ENCODE measurements at regions of chr19 and their contacts with region 1.

Region 1: GRCh38 chr19:46661020-46661731 is at the start of gene DACT3:
- DNase-seq: peak; percentile 100
- ATAC-seq: peak; percentile 96
- H3K4me3 ChIP-seq: peak within 1 kb of the TSS; percentile 26
- H3K4me1 ChIP-seq: peaks cover 16% of the 10 kb centered on the region
- CTCF ChIP-seq: no peak
- total RNA-seq, gene DACT3: 1.9 to 60.9 (median 3.4) TPM

Region 2: GRCh38 chr19:46614114-46614722 is 47.0 kb before region 1 on chr19:
- intact Hi-C with region 1: loop called (anchors 2 to 5 kb)
- DNase-seq: peak; percentile 81 to 92 (median 89)
- ATAC-seq: peak; percentile 82
- H3K4me3 ChIP-seq: no peak overlapping the region
- H3K4me1 ChIP-seq: peaks cover 7% of the 10 kb centered on the region
- CTCF ChIP-seq: peak; percentile 77

Region 3: DNA sequence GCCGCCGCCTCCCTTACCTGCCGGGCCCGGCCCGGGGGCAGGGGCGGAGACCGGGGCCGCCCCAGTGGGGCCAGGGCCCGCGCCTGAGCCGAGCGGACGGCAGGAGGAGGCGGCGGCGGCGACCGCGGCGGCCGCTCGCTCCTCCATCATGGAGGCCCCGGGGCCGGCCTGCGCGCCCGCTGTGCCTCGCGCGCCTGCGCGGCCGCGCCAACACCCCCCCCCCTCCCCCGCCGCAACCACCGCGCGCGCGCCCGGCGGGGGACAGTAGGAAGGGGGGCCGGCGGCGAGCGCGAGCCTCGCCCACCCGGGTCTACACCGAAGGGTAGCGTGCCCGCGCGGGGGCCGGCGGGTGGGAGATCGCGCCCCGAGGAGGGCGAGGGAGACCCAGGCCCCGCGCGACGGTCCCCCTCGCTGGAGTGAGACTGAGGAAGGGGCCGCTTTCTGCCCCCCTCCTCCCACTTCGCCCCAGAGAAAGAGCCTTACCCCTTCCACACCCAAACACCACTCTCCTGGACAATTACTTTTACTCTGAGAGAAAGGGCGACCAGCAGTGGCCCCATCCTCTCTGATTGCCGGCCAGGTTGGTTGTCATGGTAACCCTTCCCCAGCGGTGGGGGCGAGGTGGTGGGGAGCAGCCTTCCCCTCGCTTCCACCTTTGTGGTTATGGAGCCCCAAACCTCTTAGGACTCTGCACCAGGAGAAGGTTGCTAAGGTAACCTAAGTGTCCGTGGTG is 85.3 kb after region 1 on chr19 and contains the start of gene STRN4:
- intact Hi-C with region 1: no loop called
- DNase-seq: peak in 2 of 3 donors; percentile 52 to 71
- ATAC-seq: peak; percentile 83
- H3K4me3 ChIP-seq: peak within 1 kb of the TSS; percentile 100
- H3K4me1 ChIP-seq: peaks cover 19% of the 10 kb centered on the region
- CTCF ChIP-seq: no peak
- total RNA-seq, gene STRN4: 68.3 to 79.2 (median 73.7) TPM

Measured in mucosa of descending colon (tissue), 3 donors.